ENCODE measurements at regions of chr21 and their contacts with region 1.

Region 1: GRCh38 chr21:41121785-41122421 is 46.1 kb upstream of the BACE2 start:
- DNase-seq: peak; percentile 34 to 93 (median 80)
- H3K4me3 ChIP-seq: no peak overlapping the region
- H3K27ac ChIP-seq: no peak overlapping the region
- H3K27me3 ChIP-seq: peaks cover 0 to 6% (median 0%) of the 10 kb centered on the region in 45 donors
- CTCF ChIP-seq: peak; percentile 46 to 88 (median 76)

Region 2: DNA sequence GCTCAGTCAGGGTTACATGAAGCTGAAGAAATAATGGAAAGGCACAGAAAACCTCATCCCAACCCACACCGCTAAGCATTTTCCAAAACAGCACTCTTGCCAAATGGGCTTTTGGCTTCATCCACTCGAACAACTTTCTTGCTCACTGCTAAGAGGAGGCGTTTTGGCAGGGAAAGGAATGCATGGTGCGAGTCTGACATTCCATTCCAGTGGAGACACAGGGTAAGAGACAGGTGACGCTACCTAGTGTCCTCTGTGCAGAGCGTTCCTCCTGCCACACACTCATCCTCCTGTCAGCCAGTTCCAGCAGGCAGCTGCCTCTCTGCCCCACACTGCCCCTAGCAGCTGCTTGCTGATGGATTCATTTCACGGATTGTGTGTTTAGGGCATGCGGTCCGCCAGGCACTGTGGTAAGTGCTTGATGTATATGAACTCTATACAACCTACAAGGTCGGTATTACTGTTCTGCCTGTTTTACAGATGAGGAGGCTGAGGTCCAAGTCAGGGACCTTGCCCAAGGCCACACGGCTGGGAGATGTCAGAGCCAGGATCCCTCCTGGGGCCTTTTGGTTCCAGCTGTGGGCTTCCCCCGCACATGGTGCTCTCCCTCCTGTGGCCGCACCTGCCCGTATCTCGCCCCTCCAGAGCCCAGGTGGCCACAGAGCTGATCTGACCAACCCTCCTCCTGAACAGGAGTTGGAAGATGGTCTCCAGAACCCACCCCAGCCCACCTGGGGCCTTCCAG is 20.3 kb after region 1 on chr21:
- intact Hi-C with region 1: loop called in 1 of 2 experiments (anchors 1 kb)
- DNase-seq: peak in 7 of 10 donors; percentile 6 to 70 (median 57)
- H3K4me3 ChIP-seq: peak overlapping the region in 1 of 59 donors; percentile 7
- H3K27ac ChIP-seq: peak overlapping the region in 3 of 59 donors; percentile 3 to 19 (median 10)
- H3K27me3 ChIP-seq: peaks cover 0 to 2% (median 0%) of the 10 kb centered on the region in 45 donors
- CTCF ChIP-seq: peak in 2 of 56 donors; percentile 9 to 11

Region 3: DNA sequence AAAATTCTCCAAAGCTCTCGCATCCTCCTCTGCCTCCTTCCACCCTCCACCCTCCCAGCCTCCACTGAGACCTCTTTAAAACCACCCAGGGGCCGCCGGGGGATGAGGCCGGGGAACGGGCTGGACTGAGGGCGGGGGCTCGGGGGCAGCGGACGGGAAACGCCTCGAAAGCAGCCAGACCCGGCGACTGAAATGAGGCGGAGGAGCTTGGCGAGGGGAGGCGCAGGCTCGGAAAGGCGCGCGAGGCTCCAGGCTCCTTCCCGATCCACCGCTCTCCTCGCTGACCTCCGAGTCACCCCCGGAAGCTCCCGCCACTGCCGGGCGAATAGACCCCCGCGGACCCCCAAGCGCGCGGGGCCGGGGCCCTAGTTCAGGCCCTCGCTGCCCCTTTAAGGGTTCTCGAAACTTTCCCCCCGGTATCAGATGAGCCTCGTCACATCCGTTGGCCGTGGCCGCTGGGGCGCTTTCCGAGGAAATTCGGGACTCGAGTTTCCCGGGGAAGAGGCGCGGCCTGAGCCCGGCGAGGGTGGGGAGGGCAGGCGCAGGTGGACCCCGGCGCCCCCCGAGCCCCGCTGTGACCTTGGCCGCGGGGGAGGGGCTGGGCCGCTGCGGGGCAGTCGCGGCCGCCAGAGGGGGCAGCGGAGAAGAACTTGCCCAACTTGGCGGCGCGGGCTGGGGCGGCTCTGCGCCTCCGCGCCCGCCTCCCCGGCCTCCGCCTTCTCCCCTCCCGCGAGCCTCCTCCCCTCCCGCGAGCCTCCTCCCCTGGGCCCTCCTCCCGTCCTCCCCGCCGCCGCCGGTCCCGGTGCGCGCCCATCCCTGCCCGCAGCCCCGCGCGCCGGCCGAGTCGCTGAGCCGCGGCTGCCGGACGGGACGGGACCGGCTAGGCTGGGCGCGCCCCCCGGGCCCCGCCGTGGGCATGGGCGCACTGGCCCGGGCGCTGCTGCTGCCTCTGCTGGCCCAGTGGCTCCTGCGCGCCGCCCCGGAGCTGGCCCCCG is 45.7 kb after region 1 on chr21 and contains the start of gene BACE2:
- intact Hi-C with region 1: no loop called
- DNase-seq: peak in 5 of 10 donors; percentile 24 to 77 (median 63)
- H3K4me3 ChIP-seq: peak within 1 kb of the TSS; percentile 47 to 82 (median 70)
- H3K27ac ChIP-seq: peak within 1 kb of the TSS in 53 of 59 donors; percentile 13 to 91 (median 79)
- H3K27me3 ChIP-seq: peaks cover 0 to 23% (median 0%) of the 10 kb centered on the region in 45 donors
- CTCF ChIP-seq: peak in 55 of 56 donors; percentile 17 to 74 (median 56)
- total RNA-seq, gene BACE2: 4.1 to 30.8 (median 12.2) TPM